ENCODE measurements at regions of chr3 and their contacts with region 1.

Region 1: DNA sequence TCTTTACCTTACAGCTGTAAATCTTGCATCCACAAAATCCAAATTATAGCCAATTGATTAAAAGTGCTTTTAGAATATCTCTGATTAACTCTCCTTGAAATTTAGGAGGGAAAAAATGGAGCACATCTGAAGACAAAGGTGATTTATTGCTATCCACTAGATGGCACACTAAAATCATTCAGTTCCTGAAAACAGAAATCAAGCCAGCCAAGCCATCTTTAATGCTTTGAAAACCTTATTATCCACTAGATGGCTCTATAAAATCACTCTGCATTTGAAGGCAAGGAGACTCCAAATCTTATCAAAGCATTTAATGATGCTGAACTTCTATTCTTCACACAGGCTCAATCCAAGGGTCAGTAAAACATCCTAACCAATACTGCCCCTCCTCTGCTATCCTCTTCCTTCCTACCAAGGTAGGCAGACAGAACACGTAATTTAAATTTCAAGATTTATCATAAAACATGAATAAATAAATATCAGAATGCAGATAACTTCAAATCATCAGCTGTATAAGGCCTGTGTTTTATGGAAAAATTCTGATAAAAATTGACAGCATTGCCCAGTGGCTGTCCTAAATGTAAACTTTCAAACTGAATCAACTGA is 48.4 kb downstream of the GOLIM4 start:
- DNase-seq: no peak
- H3K4me3 ChIP-seq: no peak overlapping the region
- H3K27ac ChIP-seq: no peak overlapping the region
- H3K4me1 ChIP-seq: peaks cover 4% of the 10 kb centered on the region
- H3K27me3 ChIP-seq: no peaks in the 10 kb centered on the region
- CTCF ChIP-seq: peak; percentile 74

Region 2: GRCh38 chr3:167734498-167735232 is 312.6 kb before region 1 on chr3 and contains the start of gene PDCD10:
- intact Hi-C with region 1: loop called (anchors 10 kb)
- DNase-seq: peak; percentile 99
- H3K4me3 ChIP-seq: peak within 1 kb of the TSS; percentile 86
- H3K27ac ChIP-seq: peak within 1 kb of the TSS; percentile 95
- H3K4me1 ChIP-seq: peaks cover 4% of the 10 kb centered on the region
- H3K27me3 ChIP-seq: no peaks in the 10 kb centered on the region
- CTCF ChIP-seq: no peak
- total RNA-seq, gene PDCD10: 67.3 to 87.0 TPM

Region 3: GRCh38 chr3:168100777-168101492 is 53.6 kb after region 1 on chr3:
- intact Hi-C with region 1: loop called (anchors 10 kb)
- DNase-seq: no peak
- H3K4me3 ChIP-seq: no peak overlapping the region
- H3K27ac ChIP-seq: no peak overlapping the region
- H3K4me1 ChIP-seq: no peaks in the 10 kb centered on the region
- H3K27me3 ChIP-seq: no peaks in the 10 kb centered on the region
- CTCF ChIP-seq: no peak

Region 4: DNA sequence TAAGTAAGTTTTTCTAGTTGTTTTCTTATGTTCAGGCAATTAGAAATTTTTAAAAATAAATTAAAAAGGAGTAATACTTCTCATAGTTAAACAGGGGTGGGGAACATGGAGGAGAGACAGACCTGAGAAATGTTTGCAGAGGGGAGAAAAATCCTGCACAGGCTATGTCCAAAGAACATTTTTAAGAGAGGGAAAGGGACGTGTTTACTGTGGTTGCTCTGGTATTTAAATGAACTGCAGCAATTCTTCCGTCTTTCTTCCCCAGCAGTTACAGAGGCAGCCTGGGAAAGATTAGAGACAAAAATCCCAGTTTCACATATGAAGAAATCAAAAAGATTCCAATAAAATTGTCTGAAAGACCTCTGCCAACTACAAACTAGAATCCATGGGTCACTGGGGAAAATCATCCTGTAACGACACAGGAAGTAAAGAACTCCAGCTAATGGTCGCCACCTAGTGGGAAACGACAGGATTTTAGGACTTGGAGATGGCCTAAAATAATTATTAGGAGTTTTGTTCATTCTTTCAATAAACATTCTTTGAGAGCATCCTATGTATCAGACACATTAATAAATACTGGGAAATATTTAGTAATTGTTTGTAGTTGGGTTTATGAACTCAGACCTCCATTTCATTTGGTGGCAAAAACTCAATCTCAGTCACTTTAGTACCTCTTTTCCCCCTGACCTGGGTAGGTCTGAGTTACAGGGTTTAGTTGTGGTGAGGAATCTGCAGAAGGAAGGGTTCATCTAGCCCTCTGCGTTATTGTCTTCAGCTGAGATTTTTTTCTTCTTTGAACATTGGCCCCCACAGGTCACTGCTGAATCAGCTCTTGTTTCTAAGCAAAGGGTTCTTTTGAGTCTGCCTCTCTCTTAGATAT is 118.3 kb after region 1 on chr3:
- intact Hi-C with region 1: loop called (anchors 2 kb)
- DNase-seq: peak; percentile 81
- H3K4me3 ChIP-seq: no peak overlapping the region
- H3K27ac ChIP-seq: no peak overlapping the region
- H3K4me1 ChIP-seq: no peaks in the 10 kb centered on the region
- H3K27me3 ChIP-seq: no peaks in the 10 kb centered on the region
- CTCF ChIP-seq: peak; percentile 71

Measured in colonic mucosa (tissue), 4 donors.